Mammary epithelial cell (primary cell): ENCODE measurements at regions of chrX and their contacts with region 1.

Region 1: GRCh38 chrX:130539721-130540321 is 138.0 kb downstream of the RBMX2 start:
- DNase-seq: peak; percentile 23
- H3K4me3 ChIP-seq: no peak overlapping the region
- H3K27ac ChIP-seq: no peak overlapping the region
- H3K4me1 ChIP-seq: no peaks in the 10 kb centered on the region
- H3K27me3 ChIP-seq: peaks cover 3% of the 10 kb centered on the region
- CTCF ChIP-seq: peak; percentile 53 to 66

Region 2: GRCh38 chrX:130339408-130340222 is 200.2 kb before region 1 on chrX and contains the start of gene SLC25A14:
- CTCF ChIA-PET with region 1: no interaction called
- dilution Hi-C with region 1: no loop called
- in situ Hi-C with region 1: no loop called
- intact Hi-C with region 1: loop called (anchors 10 kb)
- DNase-seq: peak; percentile 71
- H3K4me3 ChIP-seq: peak within 1 kb of the TSS; percentile 44 to 85 (median 69)
- H3K27ac ChIP-seq: peak within 1 kb of the TSS; percentile 66
- H3K4me1 ChIP-seq: no peaks in the 10 kb centered on the region
- H3K27me3 ChIP-seq: no peaks in the 10 kb centered on the region
- CTCF ChIP-seq: no peak
- total RNA-seq, gene SLC25A14: 8.8 to 12.4 TPM

Region 3: DNA sequence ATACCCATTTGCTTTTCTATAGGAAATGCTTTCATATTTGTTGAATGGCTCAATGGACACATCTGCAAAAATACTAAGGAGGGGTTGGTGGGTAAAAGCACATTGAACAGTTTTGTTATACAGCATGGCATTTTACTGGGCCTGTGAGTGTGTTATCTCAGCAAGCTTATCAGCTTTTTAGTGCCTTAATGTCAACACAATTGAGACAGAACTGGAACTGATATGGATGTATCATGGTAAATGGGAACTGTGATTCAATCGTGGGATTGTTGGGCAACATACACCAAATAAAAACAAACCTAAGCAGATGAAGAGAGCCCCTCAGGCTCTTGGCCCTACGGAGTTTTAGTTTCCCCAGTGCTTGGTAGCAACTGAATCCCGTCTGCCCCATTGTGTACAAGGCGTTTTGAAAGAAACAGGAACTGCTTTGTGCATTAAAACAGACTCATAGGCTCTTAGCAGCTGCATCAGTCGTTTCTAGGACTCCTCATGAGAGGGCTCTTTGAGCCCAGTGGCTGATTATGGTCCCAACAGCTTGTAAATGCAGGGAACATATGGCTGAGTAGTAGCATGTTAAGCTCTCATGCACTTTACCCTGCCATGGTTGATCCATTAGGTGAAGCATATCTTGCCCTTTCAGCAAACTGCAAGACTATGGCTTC is 161.7 kb before region 1 on chrX:
- CTCF ChIA-PET with region 1: no interaction called
- dilution Hi-C with region 1: no loop called
- in situ Hi-C with region 1: no loop called
- intact Hi-C with region 1: no loop called
- DNase-seq: no peak
- H3K4me3 ChIP-seq: no peak overlapping the region
- H3K27ac ChIP-seq: no peak overlapping the region
- H3K4me1 ChIP-seq: no peaks in the 10 kb centered on the region
- H3K27me3 ChIP-seq: no peaks in the 10 kb centered on the region
- CTCF ChIP-seq: no peak

Region 4: DNA sequence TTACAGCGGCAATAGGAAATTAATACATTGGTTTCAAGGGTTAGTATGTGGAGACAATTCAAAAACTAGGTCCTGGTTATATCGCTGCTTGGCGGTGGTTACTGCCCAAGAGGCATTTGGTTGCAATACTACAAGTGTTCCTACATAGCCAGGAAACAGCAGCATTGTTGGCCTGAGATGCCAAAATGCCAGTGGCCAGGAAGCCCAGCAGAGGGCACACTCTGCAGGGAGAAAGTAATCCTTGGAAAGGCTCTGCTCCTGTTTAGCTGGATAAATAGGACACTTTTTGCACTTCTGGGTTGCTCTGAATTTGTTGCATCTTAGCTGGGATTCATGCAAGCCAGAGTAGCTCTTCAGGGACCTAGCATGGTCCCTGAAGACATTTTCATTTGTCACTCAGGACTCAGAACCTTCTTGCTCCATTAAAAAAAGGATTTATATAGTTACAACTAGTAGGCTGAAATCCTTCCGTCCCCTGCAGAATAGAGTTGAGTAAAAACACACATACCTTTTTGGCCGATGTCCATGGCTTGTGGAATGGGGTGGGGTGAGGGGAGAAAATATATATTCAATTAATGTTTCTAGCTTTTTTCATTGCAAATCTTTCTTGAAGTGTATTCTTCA is 146.3 kb before region 1 on chrX:
- CTCF ChIA-PET with region 1: no interaction called
- dilution Hi-C with region 1: no loop called
- in situ Hi-C with region 1: no loop called
- intact Hi-C with region 1: loop called (anchors 5 kb)
- DNase-seq: peak; percentile 28
- H3K4me3 ChIP-seq: no peak overlapping the region
- H3K27ac ChIP-seq: no peak overlapping the region
- H3K4me1 ChIP-seq: no peaks in the 10 kb centered on the region
- H3K27me3 ChIP-seq: no peaks in the 10 kb centered on the region
- CTCF ChIP-seq: peak; percentile 78 to 86